Naive thymus-derived CD4-positive, alpha-beta T cell (primary cell): ENCODE measurements at regions of chr1 and their contacts with region 1.

Region 1: GRCh38 chr1:5514519-5515183 is 477.6 kb downstream of the NPHP4 start:
- DNase-seq: peak; percentile 29 to 75 (median 60)
- ATAC-seq: peak; percentile 72
- H3K4me3 ChIP-seq: no peak overlapping the region
- H3K4me3 Mint-ChIP-seq: no peak overlapping the region
- H3K27ac ChIP-seq: no peak overlapping the region
- H3K27ac Mint-ChIP-seq: no peak overlapping the region
- H3K4me1 ChIP-seq: no peaks in the 10 kb centered on the region
- H3K4me1 Mint-ChIP-seq: peaks cover 0 to 10% (median 5%) of the 10 kb centered on the region in 7 donors
- H3K27me3 ChIP-seq: no peaks in the 10 kb centered on the region
- H3K27me3 Mint-ChIP-seq: peaks cover 0 to 16% (median 10%) of the 10 kb centered on the region in 5 donors

Region 2: GRCh38 chr1:3910857-3911845 is 1603.5 kb before region 1 on chr1:
- CTCF ChIA-PET with region 1: no interaction called
- POLR2A ChIA-PET with region 1: no interaction called
- intact Hi-C with region 1: loop called in 1 of 2 experiments (anchors 5 kb)
- DNase-seq: peak; percentile 56 to 81 (median 73)
- ATAC-seq: peak; percentile 88
- H3K4me3 ChIP-seq: no peak overlapping the region
- H3K4me3 Mint-ChIP-seq: peak overlapping the region in 6 of 10 donors; percentile 29 to 70 (median 59)
- H3K27ac ChIP-seq: no peak overlapping the region
- H3K27ac Mint-ChIP-seq: no peak overlapping the region
- H3K4me1 ChIP-seq: no peaks in the 10 kb centered on the region
- H3K4me1 Mint-ChIP-seq: peaks cover 0 to 8% (median 3%) of the 10 kb centered on the region in 7 donors
- H3K27me3 ChIP-seq: no peaks in the 10 kb centered on the region
- H3K27me3 Mint-ChIP-seq: peaks cover 0 to 5% (median 0%) of the 10 kb centered on the region in 5 donors

Region 3: GRCh38 chr1:5745776-5746610 is 231.3 kb after region 1 on chr1:
- CTCF ChIA-PET with region 1: no interaction called
- POLR2A ChIA-PET with region 1: no interaction called
- intact Hi-C with region 1: loop called in 1 of 2 experiments (anchors 1 kb)
- DNase-seq: peak in 8 of 9 donors; percentile 28 to 56 (median 36)
- ATAC-seq: peak; percentile 68
- H3K4me3 ChIP-seq: no peak overlapping the region
- H3K4me3 Mint-ChIP-seq: no peak overlapping the region
- H3K27ac ChIP-seq: no peak overlapping the region
- H3K27ac Mint-ChIP-seq: no peak overlapping the region
- H3K4me1 ChIP-seq: no peaks in the 10 kb centered on the region
- H3K4me1 Mint-ChIP-seq: peaks cover 0 to 5% (median 0%) of the 10 kb centered on the region in 7 donors
- H3K27me3 ChIP-seq: no peaks in the 10 kb centered on the region
- H3K27me3 Mint-ChIP-seq: peaks cover 0 to 38% (median 13%) of the 10 kb centered on the region in 5 donors

Region 4: DNA sequence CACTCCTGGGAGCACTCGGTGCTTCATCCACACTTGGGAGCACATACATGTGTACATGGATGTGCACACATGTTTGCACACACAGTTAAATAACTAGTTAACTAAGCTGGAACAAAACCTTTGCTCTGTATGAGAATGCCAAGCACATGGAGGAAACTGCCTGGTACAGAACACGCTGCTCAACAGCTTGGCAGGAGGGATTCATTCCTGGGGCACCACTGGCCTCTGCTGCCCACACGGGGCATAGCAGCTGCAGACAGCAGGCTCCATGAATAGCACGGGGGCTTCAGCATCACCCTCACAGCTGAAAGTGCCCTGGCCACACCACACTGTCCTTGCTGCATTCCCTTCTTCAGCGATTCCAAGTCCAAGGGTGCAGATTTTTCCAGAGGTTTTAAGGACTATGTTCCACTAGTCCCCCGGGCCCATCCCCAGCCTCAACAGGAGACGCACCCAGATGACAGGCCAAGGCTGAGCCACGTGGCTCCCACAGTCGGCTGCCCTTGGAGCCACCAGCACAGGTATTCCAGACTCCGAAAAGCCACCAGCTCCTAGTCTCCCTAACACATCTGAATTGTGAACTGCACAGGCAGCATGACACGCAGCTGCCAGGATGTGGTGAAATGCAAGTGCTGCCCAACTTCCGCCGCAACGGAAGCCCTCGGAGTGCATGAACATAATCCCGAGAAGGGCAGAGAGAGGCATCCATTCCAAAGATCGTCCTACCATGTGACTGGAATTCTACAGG is 460.7 kb after region 1 on chr1:
- CTCF ChIA-PET with region 1: no interaction called
- POLR2A ChIA-PET with region 1: no interaction called
- intact Hi-C with region 1: loop called in 1 of 2 experiments (anchors 1 kb)
- DNase-seq: peak in 6 of 9 donors; percentile 27 to 44 (median 39)
- ATAC-seq: peak; percentile 86
- H3K4me3 ChIP-seq: no peak overlapping the region
- H3K4me3 Mint-ChIP-seq: peak overlapping the region in 6 of 10 donors; percentile 18 to 73 (median 55)
- H3K27ac ChIP-seq: no peak overlapping the region
- H3K27ac Mint-ChIP-seq: peak overlapping the region in 4 of 9 donors; percentile 33 to 83 (median 46)
- H3K4me1 ChIP-seq: peaks cover 0 to 5% of the 10 kb centered on the region in 2 donors
- H3K4me1 Mint-ChIP-seq: peaks cover 0 to 38% (median 16%) of the 10 kb centered on the region in 7 donors
- H3K27me3 ChIP-seq: no peaks in the 10 kb centered on the region
- H3K27me3 Mint-ChIP-seq: no peaks in the 10 kb centered on the region